Stomach (tissue), 19 donors: ENCODE measurements at regions of chr10 and their contacts with region 1.

Region 1: GRCh38 chr10:101830322-101831168 is 12.3 kb upstream of the OGA start:
- DNase-seq: peak; percentile 93 to 97
- H3K4me3 ChIP-seq: peak overlapping the region; percentile 50 to 68 (median 56)
- H3K27ac ChIP-seq: peak overlapping the region; percentile 62 to 81 (median 75)
- H3K4me1 ChIP-seq: peaks cover 17 to 41% (median 25%) of the 10 kb centered on the region in 4 donors
- H3K27me3 ChIP-seq: no peaks in the 10 kb centered on the region
- CTCF ChIP-seq: peak in 1 of 7 experiments; percentile 10
- EP300 ChIP-seq: no peak
- POLR2A ChIP-seq: no peak

Region 2: GRCh38 chr10:102009801-102010425 is 179.4 kb after region 1 on chr10:
- intact Hi-C with region 1: loop called (anchors 10 kb)
- DNase-seq: peak; percentile 47 to 91
- H3K4me3 ChIP-seq: no peak overlapping the region
- H3K27ac ChIP-seq: no peak overlapping the region
- H3K4me1 ChIP-seq: peaks cover 0 to 7% (median 2%) of the 10 kb centered on the region in 4 donors
- H3K27me3 ChIP-seq: no peaks in the 10 kb centered on the region
- CTCF ChIP-seq: peak in 5 of 7 experiments; percentile 76 to 94 (median 82)
- EP300 ChIP-seq: no peak
- POLR2A ChIP-seq: no peak